Common myeloid progenitor, CD34-positive (primary cell): ENCODE measurements at regions of chr6 and their contacts with region 1.

Region 1: GRCh38 chr6:53718597-53719460 is 53.3 kb upstream of the KLHL31 start:
- DNase-seq: peak; percentile 67 to 88 (median 88)
- H3K4me3 ChIP-seq: peak overlapping the region in 1 of 7 experiments; percentile 17
- H3K27ac ChIP-seq: no peak overlapping the region
- H3K4me1 ChIP-seq: peaks cover 0 to 3% (median 0%) of the 10 kb centered on the region in 4 experiments
- H3K27me3 ChIP-seq: no peaks in the 10 kb centered on the region

Region 2: DNA sequence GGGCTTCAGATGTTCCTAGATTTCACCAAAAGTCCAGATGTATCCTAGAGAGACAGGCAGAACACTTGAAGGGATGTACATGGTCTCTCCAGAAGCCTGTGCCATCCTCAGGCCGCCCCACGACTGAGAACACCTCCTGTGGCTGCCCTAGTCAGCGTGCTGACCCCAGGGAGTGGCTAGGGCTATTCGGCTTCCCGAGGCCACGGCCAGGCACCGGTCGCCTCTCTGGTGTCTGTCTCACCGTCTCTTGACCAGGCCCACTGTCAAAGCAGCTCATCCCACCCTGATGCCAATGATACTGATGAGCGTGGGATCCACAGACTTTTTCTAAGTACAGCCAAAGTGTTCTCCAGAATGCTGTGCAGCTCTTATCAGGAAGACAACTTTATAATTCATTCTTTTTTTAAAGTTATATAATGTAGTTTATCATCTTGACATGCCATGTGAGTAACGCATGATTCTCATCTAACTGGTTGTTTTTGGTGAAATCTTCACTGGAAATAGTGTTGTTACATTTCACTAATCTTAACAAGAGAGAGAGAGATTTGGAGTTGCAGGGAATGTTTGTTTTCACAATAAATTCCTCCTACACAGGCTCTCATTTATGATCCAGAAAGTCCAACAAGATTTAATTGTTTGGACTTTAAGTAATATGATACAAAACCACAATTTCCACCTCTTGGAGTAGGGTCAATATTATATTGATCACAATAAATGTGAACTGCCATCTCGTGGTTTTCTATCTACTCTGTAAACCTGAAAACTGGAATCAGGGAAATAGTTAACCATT is 11.5 kb before region 1 on chr6:
- CTCF ChIA-PET with region 1: interaction called, 39 read pairs
- POLR2A ChIA-PET with region 1: interaction called, 4 read pairs
- DNase-seq: no peak
- H3K4me3 ChIP-seq: no peak overlapping the region
- H3K27ac ChIP-seq: no peak overlapping the region
- H3K4me1 ChIP-seq: peaks cover 0 to 9% (median under 1%) of the 10 kb centered on the region in 4 experiments
- H3K27me3 ChIP-seq: no peaks in the 10 kb centered on the region